H1 (cell line): ENCODE measurements at regions of chr14 and their contacts with region 1.

Region 1: GRCh38 chr14:88667555-88668273 is 104.9 kb downstream of the ZC3H14 start:
- DNase-seq: peak in 1 of 2 experiments; percentile 60
- H3K4me3 ChIP-seq: no peak overlapping the region
- H3K27ac ChIP-seq: no peak overlapping the region
- H3K4me1 ChIP-seq: no peaks in the 10 kb centered on the region
- H3K27me3 ChIP-seq: no peaks in the 10 kb centered on the region
- CTCF ChIP-seq: peak; percentile 24 to 86 (median 85)
- EP300 ChIP-seq: no peak
- POLR2A ChIP-seq: no peak
- RAD21 ChIP-seq: peak; percentile 92 to 94

Region 2: GRCh38 chr14:88551094-88551870 is 116.4 kb before region 1 on chr14:
- CTCF ChIA-PET with region 1: no interaction called
- POLR2A ChIA-PET with region 1: no interaction called
- DNase-seq: peak in 1 of 2 experiments; percentile 96
- H3K4me3 ChIP-seq: peak overlapping the region; percentile 57 to 69 (median 62)
- H3K27ac ChIP-seq: no peak overlapping the region
- H3K4me1 ChIP-seq: peaks cover 0 to 10% (median 3%) of the 10 kb centered on the region in 4 experiments; a peak in 3 of 7 replicates
- H3K27me3 ChIP-seq: no peaks in the 10 kb centered on the region
- CTCF ChIP-seq: peak in 2 of 3 experiments; percentile 28 to 41; a peak in 2 of 4 replicates
- EP300 ChIP-seq: peak in 1 of 2 experiments; percentile 71; a peak in 1 of 3 replicates
- POLR2A ChIP-seq: peak; percentile 49 to 73
- RAD21 ChIP-seq: peak; percentile 55 to 58

Region 3: GRCh38 chr14:88682495-88683114 is 14.9 kb after region 1 on chr14:
- CTCF ChIA-PET with region 1: interaction called, 65 read pairs
- POLR2A ChIA-PET with region 1: interaction called, 7 read pairs
- DNase-seq: peak in 1 of 2 experiments; percentile 9
- H3K4me3 ChIP-seq: no peak overlapping the region
- H3K27ac ChIP-seq: no peak overlapping the region
- H3K4me1 ChIP-seq: 0 out of 7 replicates have a peak, but pooled peaks cover 0 to 3% (median 1%) of the 10 kb centered on the region in 4 experiments
- H3K27me3 ChIP-seq: no peaks in the 10 kb centered on the region
- CTCF ChIP-seq: no peak
- EP300 ChIP-seq: no peak
- POLR2A ChIP-seq: peak in 1 of 2 experiments; percentile 51; a peak in 1 of 3 replicates
- RAD21 ChIP-seq: no peak; a peak in 1 of 4 replicates

Region 4: GRCh38 chr14:88792572-88793258 is 125.0 kb after region 1 on chr14 and contains the start of gene EML5:
- CTCF ChIA-PET with region 1: interaction called, 18 read pairs
- POLR2A ChIA-PET with region 1: no interaction called
- DNase-seq: peak; percentile 46 to 89
- H3K4me3 ChIP-seq: peak within 1 kb of the TSS; percentile 38 to 81 (median 74)
- H3K27ac ChIP-seq: no peak within 1 kb of the TSS
- H3K4me1 ChIP-seq: no peaks in the 10 kb centered on the region
- H3K27me3 ChIP-seq: peaks cover 8 to 30% (median 19%) of the 10 kb centered on the region in 4 experiments
- CTCF ChIP-seq: peak; percentile 10 to 28 (median 12); a peak in 3 of 4 replicates
- EP300 ChIP-seq: no peak
- POLR2A ChIP-seq: peak in 1 of 2 experiments; percentile 57; a peak in 2 of 3 replicates
- RAD21 ChIP-seq: peak in 1 of 2 experiments; percentile 20; a peak in 1 of 4 replicates
- total RNA-seq, gene EML5: 0.55 and 0.88 TPM in 2 replicates

Region 5: GRCh38 chr14:88863167-88863684 is 195.5 kb after region 1 on chr14:
- CTCF ChIA-PET with region 1: interaction called, 36 read pairs
- POLR2A ChIA-PET with region 1: no interaction called
- DNase-seq: no peak
- H3K4me3 ChIP-seq: no peak overlapping the region
- H3K27ac ChIP-seq: no peak overlapping the region
- H3K4me1 ChIP-seq: no peaks in the 10 kb centered on the region
- H3K27me3 ChIP-seq: no peaks in the 10 kb centered on the region
- CTCF ChIP-seq: no peak
- EP300 ChIP-seq: no peak
- POLR2A ChIP-seq: no peak
- RAD21 ChIP-seq: no peak

Region 6: GRCh38 chr14:88868558-88869159 is 200.9 kb after region 1 on chr14:
- CTCF ChIA-PET with region 1: interaction called, 36 read pairs
- POLR2A ChIA-PET with region 1: no interaction called
- DNase-seq: no peak
- H3K4me3 ChIP-seq: no peak overlapping the region
- H3K27ac ChIP-seq: no peak overlapping the region
- H3K4me1 ChIP-seq: no peaks in the 10 kb centered on the region
- H3K27me3 ChIP-seq: no peaks in the 10 kb centered on the region
- CTCF ChIP-seq: peak in 2 of 3 experiments; percentile 43 to 48; a peak in 2 of 4 replicates
- EP300 ChIP-seq: no peak
- POLR2A ChIP-seq: no peak
- RAD21 ChIP-seq: peak; percentile 71 to 76

Region 7: GRCh38 chr14:89013084-89013504 is 345.4 kb after region 1 on chr14:
- CTCF ChIA-PET with region 1: interaction called, 13 read pairs
- POLR2A ChIA-PET with region 1: no interaction called
- DNase-seq: peak in 1 of 2 experiments; percentile 69
- H3K4me3 ChIP-seq: no peak overlapping the region
- H3K27ac ChIP-seq: no peak overlapping the region
- H3K4me1 ChIP-seq: no peaks in the 10 kb centered on the region
- H3K27me3 ChIP-seq: no peaks in the 10 kb centered on the region
- CTCF ChIP-seq: peak; percentile 47 to 66 (median 62)
- EP300 ChIP-seq: no peak
- POLR2A ChIP-seq: no peak
- RAD21 ChIP-seq: peak; percentile 80 to 83